ENCODE measurements at regions of chr3 and their contacts with region 1.

Region 1: DNA sequence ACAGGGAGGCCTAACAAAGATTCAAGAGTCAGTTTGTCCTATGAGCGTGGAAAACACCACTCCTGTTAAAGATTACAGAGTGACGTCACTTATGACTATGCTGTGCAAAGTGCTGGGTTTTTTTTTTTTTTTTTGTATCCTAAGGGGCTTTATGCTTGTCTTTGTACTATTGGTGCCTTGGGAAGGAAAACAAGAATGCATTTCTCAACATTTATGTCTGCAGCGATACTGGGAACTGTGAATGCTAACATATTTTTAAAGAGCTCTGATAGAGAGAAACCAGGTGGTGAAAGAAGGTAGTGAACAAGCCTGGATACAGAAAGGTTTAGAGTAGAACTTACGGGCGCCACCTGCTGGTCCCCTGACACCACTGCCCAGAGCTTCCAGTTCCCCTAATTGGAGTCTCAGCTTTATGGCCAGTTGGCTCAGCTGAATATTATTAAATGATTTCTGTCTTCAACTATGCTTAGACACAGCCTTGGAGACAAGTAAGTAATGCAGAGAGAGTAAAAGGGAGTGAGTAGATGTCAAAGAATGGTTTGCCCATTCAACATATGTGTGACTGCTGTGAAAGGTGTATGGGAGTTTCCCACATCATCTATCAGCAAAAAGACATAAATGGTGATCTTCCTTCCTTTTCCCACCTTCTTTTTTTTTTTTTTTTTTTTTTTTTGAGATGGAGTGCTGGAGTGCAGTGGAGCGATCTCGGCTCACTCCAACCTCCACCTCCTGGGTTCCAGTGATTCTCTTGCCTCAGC is 807.9 kb upstream of the CFAP20DC start:
- DNase-seq: peak; percentile 67 to 91 (median 82)
- ATAC-seq: peak; percentile 100
- H3K4me3 ChIP-seq: no peak overlapping the region
- H3K4me1 ChIP-seq: no peaks in the 10 kb centered on the region
- CTCF ChIP-seq: peak; percentile 86

Region 2: DNA sequence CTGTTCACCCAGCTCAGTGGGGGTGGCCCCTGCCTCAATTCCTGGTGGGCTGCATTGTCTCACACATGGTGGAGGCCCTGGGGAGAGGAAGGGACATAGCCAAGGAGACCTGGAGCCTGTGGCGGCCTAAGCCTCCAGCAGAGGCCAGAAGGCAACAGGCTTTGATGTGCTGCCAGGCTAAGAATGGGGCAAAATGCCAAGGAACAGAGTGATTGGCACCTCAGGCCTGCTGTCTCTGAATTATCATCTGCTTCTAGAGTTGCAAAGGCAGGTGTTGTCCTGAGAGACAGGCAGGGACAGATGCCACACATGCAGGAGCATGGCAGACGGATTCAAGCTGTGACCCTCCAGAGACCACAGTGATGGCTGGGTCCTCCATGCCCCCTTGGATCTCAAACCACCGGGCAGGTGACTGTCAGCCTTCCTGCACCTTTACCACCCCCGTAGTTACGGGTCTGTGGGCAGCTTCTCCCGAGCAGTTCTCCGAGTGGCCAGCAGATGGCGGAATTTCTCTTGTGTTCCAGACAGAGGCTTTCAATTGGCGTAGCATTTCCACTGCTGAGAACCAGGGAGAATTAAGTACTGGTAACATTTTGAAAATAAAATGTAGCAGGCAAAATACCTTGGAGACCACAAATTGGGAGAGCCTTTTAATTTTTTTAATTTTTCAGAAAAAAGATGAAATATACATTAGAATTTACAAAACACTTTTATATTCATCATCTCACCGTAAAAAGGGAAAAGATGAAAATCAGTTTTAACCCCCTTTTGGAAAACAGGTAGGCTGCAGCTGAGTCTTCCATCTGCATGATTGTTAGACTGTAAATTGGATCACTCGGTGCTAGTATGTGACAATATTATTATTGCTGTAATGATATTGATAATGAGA is 282.4 kb before region 1 on chr3:
- intact Hi-C with region 1: loop called (anchors 5 to 10 kb)
- DNase-seq: peak; percentile 79 to 96 (median 91)
- ATAC-seq: peak; percentile 88
- H3K4me3 ChIP-seq: no peak overlapping the region
- H3K4me1 ChIP-seq: no peaks in the 10 kb centered on the region
- CTCF ChIP-seq: peak; percentile 95

Region 3: DNA sequence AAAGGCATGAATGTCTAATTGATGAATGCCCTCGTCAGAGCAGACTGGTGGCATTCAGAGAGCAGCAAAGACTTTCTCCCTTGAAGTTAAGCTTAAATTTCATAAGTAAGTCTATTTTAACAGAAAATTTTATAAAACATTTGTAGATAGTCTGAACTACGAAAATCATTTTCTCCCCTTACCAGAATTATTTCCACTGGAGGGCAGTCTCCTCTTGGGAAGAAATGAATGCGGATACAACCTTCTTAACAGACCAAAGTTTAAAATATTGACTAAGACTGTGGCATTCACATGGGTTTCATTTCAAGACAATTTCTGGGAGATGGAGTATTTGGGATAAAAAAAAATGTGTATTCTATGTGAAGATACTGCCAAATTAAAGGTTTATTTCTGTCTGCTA is 724.5 kb after region 1 on chr3:
- intact Hi-C with region 1: no loop called
- DNase-seq: no peak
- ATAC-seq: no peak
- H3K4me3 ChIP-seq: no peak overlapping the region
- H3K4me1 ChIP-seq: no peaks in the 10 kb centered on the region
- CTCF ChIP-seq: no peak

Measured in mucosa of descending colon (tissue), 3 donors.